ENCODE measurements at regions of chr9 and their contacts with region 1.

Region 1: DNA sequence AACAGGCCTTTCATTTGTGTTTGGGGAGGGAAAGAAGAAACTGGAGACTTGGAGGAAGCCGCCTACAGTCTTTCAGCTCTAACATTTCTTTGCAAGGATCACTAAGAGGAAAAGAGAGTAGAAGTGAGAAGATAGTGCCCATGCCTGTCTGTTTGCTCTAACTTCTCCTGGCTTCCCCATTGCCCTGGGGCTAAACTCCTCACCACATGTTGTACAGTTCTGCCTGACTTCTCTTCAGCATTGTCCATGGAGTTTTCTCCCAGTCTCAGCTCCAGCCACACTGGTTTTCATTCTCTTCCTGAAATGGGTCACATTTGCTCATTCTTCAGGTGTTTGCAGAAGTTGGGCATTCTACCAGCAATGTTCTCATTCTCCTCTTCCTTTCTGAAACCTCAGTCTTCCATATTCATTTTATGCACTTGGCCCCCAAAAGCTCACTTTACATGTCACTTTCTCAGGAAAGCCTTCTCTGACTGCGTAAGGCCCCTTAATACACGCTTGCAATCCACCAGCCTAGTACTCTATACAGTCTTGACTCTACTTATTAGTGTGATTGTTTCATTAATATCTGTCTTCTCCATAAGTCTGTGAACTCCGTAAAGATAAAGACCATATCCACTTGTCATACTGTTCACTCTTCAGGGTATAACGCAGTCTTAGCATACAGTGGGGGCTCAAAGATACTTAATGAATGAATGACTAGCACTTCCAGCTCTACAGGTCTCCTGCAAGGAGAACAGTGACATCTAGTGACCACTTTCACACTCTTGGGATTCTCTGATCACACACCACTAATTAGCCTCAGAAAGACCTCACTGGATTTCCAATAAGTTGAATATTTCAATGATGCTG is 40.2 kb upstream of the TRIM32 start:
- DNase-seq: no peak
- ATAC-seq: peak in 3 of 4 donors; percentile 65 to 76 (median 74)
- H3K4me3 ChIP-seq: no peak overlapping the region
- H3K27ac ChIP-seq: no peak overlapping the region
- H3K4me1 ChIP-seq: peaks cover 37% of the 10 kb centered on the region
- H3K27me3 ChIP-seq: no peaks in the 10 kb centered on the region
- CTCF ChIP-seq: peak; percentile 49

Region 2: DNA sequence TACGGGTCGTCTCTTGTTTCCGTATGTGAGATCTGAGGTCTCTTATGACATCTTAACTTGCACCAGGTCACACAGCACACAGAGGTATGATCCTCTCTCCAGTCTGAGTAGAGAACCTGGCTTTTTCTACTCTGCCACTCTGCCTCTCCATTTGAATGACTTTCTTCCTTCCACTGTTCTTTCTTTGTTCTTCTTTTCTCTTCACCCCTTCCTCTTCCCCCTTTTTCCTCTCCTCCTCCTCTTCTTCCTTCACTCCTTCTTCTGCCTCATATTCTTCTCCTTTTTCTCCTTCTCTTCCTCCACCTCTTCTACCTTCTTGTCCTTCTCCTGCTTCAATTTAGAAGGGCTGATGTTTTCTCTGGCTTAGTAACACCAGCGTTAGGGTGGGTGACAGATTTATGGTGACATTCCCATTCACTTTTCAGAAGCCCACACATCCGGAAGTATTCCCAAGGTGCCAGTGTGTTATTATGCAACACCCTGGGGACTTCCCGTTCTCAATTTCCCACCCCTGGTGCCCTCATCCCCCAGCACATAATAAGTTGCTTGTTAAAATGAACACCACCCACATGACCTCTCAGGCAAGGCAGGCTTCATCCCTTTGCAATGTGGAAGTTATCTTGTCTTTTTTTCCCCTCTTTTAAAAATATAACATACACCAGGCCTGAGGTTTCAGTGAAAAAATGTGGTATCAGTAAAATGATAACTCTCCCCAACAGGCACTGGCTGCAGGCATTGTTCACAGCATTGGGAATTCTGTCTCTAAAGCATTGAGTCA is 371.3 kb before region 1 on chr9:
- intact Hi-C with region 1: loop called in 1 of 2 experiments (anchors 10 kb)
- DNase-seq: no peak
- ATAC-seq: no peak
- H3K4me3 ChIP-seq: no peak overlapping the region
- H3K27ac ChIP-seq: no peak overlapping the region
- H3K4me1 ChIP-seq: no peaks in the 10 kb centered on the region
- H3K27me3 ChIP-seq: no peaks in the 10 kb centered on the region
- CTCF ChIP-seq: no peak

Region 3: GRCh38 chr9:116337015-116337414 is 309.9 kb before region 1 on chr9:
- intact Hi-C with region 1: no loop called
- DNase-seq: no peak
- ATAC-seq: no peak
- H3K4me3 ChIP-seq: no peak overlapping the region
- H3K27ac ChIP-seq: no peak overlapping the region
- H3K4me1 ChIP-seq: no peaks in the 10 kb centered on the region
- H3K27me3 ChIP-seq: no peaks in the 10 kb centered on the region
- CTCF ChIP-seq: no peak

Region 4: DNA sequence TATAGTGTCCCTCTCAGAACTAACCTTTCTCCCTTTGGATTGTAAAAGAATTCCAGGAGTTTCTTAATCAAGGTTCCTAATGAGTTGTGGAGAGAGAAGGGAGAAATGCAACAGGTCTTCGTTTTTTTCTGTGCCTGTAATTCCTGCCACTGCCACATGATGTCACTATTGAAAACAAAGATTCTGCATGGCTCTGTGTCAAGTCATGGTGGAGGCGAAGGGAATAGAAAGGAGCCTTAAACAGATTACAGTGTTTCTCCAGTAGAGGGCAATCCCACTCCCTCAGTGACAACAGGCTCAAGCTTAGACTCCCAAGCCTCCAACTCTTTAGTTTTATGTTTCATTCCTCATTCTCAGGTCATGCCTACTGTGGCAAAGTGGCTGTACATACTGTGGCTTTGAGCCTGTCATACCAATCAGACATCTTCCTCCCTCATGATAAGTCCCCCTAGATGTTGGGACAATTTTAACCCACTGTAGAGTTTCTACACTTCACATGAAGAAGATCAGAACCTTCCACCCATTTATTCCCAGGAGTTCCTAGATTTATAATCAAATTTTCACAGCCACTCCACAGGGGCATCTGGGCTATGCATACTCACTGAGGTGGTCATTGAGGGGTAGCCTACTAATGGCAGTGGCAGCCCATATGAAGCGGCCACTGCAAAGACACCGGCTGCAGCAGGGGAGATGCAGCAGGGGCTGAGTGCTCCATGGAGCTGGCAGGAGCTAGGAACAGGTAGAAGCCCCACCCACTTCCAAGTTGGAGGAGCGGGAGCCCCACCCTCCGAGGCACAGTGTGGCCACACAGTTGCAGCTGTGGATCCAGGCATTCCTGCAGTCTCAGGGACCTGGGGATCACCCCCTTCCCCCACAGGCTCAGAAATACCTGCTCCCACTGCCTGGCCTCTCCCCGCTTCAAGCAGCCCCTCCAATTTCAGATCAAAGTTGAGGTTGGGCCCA is 57.2 kb before region 1 on chr9:
- intact Hi-C with region 1: loop called in 1 of 2 experiments (anchors 5 kb)
- DNase-seq: no peak
- ATAC-seq: peak in 1 of 4 donors; percentile 50
- H3K4me3 ChIP-seq: no peak overlapping the region
- H3K27ac ChIP-seq: no peak overlapping the region
- H3K4me1 ChIP-seq: no peaks in the 10 kb centered on the region
- H3K27me3 ChIP-seq: no peaks in the 10 kb centered on the region
- CTCF ChIP-seq: peak; percentile 29

Region 5: GRCh38 chr9:116632990-116633838 is 13.7 kb before region 1 on chr9:
- intact Hi-C with region 1: no loop called
- DNase-seq: no peak
- ATAC-seq: peak; percentile 19 to 56 (median 50)
- H3K4me3 ChIP-seq: no peak overlapping the region
- H3K27ac ChIP-seq: no peak overlapping the region
- H3K4me1 ChIP-seq: no peaks in the 10 kb centered on the region
- H3K27me3 ChIP-seq: no peaks in the 10 kb centered on the region
- CTCF ChIP-seq: no peak

Measured in psoas muscle (tissue), 8 donors.